ENCODE measurements at regions of chr5 and their contacts with region 1.

Region 1: GRCh38 chr5:139574641-139575312 is 13.6 kb downstream of the UBE2D2 start:
- DNase-seq: peak in 5 of 9 experiments; percentile 16 to 76 (median 45)
- ATAC-seq: peak; percentile 42
- H3K4me3 ChIP-seq: no peak overlapping the region
- H3K4me3 Mint-ChIP-seq: peak overlapping the region; percentile 20
- H3K27ac ChIP-seq: peak overlapping the region in 1 of 2 experiments; percentile 34
- H3K27ac Mint-ChIP-seq: peak overlapping the region; percentile 43
- H3K4me1 ChIP-seq: peaks cover 75% of the 10 kb centered on the region
- H3K4me1 Mint-ChIP-seq: peaks cover 79% of the 10 kb centered on the region
- H3K27me3 ChIP-seq: no peaks in the 10 kb centered on the region
- H3K27me3 Mint-ChIP-seq: no peaks in the 10 kb centered on the region
- CTCF ChIP-seq: peak; percentile 72

Region 2: DNA sequence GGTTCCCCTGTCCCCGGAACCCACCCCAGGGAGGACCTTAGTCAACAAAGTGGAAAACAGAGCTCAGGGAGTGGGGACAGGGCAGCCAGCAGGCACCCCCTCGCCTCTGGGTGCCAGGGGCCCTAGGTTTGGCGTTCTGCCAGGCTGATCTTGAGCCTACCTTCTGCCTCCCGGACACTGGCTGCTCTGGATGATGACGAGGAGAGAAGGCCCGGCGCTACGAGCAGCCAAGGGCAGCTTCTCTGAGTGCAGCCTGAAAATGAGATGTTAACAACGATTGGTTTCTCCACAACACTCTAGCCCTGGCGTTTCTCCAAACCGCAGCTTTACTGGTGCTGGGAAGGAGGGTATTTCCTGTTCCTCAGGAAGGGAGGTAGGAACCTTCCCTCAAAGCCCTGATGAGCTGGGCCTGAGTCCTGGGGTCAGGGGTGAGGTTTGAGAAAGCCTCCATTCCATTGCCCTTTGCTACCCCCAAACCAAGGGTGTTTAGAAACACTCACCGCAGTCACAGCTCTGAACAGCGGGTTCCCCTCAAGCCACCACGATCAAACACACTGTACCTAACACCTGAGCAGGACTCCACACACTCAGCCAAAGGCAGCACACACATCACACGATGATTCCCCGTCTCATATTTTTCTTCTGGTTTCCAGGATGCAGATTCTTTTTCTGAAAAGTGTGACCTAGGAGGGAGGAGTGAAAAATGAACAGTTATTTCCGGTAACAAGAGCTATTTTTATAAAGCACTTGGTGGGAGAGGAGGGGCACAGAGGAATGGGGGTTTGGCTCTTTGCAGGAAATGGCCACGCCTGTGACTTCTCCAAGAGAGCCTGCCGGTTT is 92.5 kb before region 1 on chr5 and contains the start of gene STING1:
- CTCF ChIA-PET with region 1: no interaction called
- POLR2A ChIA-PET with region 1: no interaction called
- intact Hi-C with region 1: no loop called
- DNase-seq: peak; percentile 22 to 89 (median 73)
- ATAC-seq: peak; percentile 78
- H3K4me3 ChIP-seq: peak within 1 kb of the TSS; percentile 56 to 61
- H3K4me3 Mint-ChIP-seq: peak within 1 kb of the TSS; percentile 90
- H3K27ac ChIP-seq: peak within 1 kb of the TSS; percentile 58 to 84
- H3K27ac Mint-ChIP-seq: peak within 1 kb of the TSS; percentile 97
- H3K4me1 ChIP-seq: peaks cover 26% of the 10 kb centered on the region
- H3K4me1 Mint-ChIP-seq: peaks cover 34% of the 10 kb centered on the region
- H3K27me3 ChIP-seq: no peaks in the 10 kb centered on the region
- H3K27me3 Mint-ChIP-seq: no peaks in the 10 kb centered on the region
- CTCF ChIP-seq: no peak
- total RNA-seq, gene STING1: 55.0 to 57.8 TPM

Region 3: GRCh38 chr5:139543423-139543991 is 31.3 kb before region 1 on chr5:
- CTCF ChIA-PET with region 1: interaction called, 3 read pairs
- POLR2A ChIA-PET with region 1: no interaction called
- intact Hi-C with region 1: loop called in 1 of 2 experiments (anchors 5 kb)
- DNase-seq: peak; percentile 5 to 76 (median 55)
- ATAC-seq: peak; percentile 90
- H3K4me3 ChIP-seq: peak overlapping the region in 1 of 2 experiments; percentile 47
- H3K4me3 Mint-ChIP-seq: peak overlapping the region; percentile 51
- H3K27ac ChIP-seq: peak overlapping the region in 1 of 2 experiments; percentile 17
- H3K27ac Mint-ChIP-seq: peak overlapping the region; percentile 32
- H3K4me1 ChIP-seq: no peaks in the 10 kb centered on the region
- H3K4me1 Mint-ChIP-seq: peaks cover 7% of the 10 kb centered on the region
- H3K27me3 ChIP-seq: no peaks in the 10 kb centered on the region
- H3K27me3 Mint-ChIP-seq: no peaks in the 10 kb centered on the region
- CTCF ChIP-seq: peak; percentile 38

Region 4: GRCh38 chr5:139611703-139612584 is 37.2 kb after region 1 on chr5:
- CTCF ChIA-PET with region 1: interaction called, 3 read pairs
- POLR2A ChIA-PET with region 1: interaction called, 4 read pairs
- intact Hi-C with region 1: loop called in 1 of 2 experiments (anchors 5 kb)
- DNase-seq: peak in 1 of 9 experiments; percentile 11
- ATAC-seq: peak; percentile 54
- H3K4me3 ChIP-seq: no peak overlapping the region
- H3K4me3 Mint-ChIP-seq: no peak overlapping the region
- H3K27ac ChIP-seq: peak overlapping the region in 1 of 2 experiments; percentile 30
- H3K27ac Mint-ChIP-seq: peak overlapping the region; percentile 76
- H3K4me1 ChIP-seq: peaks cover 5% of the 10 kb centered on the region
- H3K4me1 Mint-ChIP-seq: peaks cover 42% of the 10 kb centered on the region
- H3K27me3 ChIP-seq: no peaks in the 10 kb centered on the region
- H3K27me3 Mint-ChIP-seq: no peaks in the 10 kb centered on the region
- CTCF ChIP-seq: no peak

Region 5: GRCh38 chr5:139690064-139690802 is 115.5 kb after region 1 on chr5:
- CTCF ChIA-PET with region 1: interaction called, 5 read pairs
- POLR2A ChIA-PET with region 1: no interaction called
- intact Hi-C with region 1: loop called (anchors 2 to 5 kb)
- DNase-seq: peak in 4 of 9 experiments; percentile 22 to 64 (median 38)
- ATAC-seq: peak; percentile 77
- H3K4me3 ChIP-seq: no peak overlapping the region
- H3K4me3 Mint-ChIP-seq: no peak overlapping the region
- H3K27ac ChIP-seq: no peak overlapping the region
- H3K27ac Mint-ChIP-seq: no peak overlapping the region
- H3K4me1 ChIP-seq: peaks cover 6% of the 10 kb centered on the region
- H3K4me1 Mint-ChIP-seq: peaks cover 19% of the 10 kb centered on the region
- H3K27me3 ChIP-seq: no peaks in the 10 kb centered on the region
- H3K27me3 Mint-ChIP-seq: no peaks in the 10 kb centered on the region
- CTCF ChIP-seq: peak; percentile 44

Measured in CD8-positive, alpha-beta T cell (primary cell).